Heart right ventricle (tissue), 16 donors: ENCODE measurements at regions of chr17 and their contacts with region 1.

Region 1: GRCh38 chr17:2029911-2030778 is at the start of gene DPH1:
- DNase-seq: peak; percentile 90
- ATAC-seq: peak; percentile 84 to 95 (median 89)
- H3K4me3 ChIP-seq: peak within 1 kb of the TSS; percentile 74 to 99 (median 95)
- H3K27ac ChIP-seq: peak within 1 kb of the TSS in 9 of 10 donors; percentile 23 to 84 (median 72)
- H3K4me1 ChIP-seq: peaks cover 10 to 43% (median 29%) of the 10 kb centered on the region in 9 donors
- H3K27me3 ChIP-seq: peaks cover 0 to 46% (median 19%) of the 10 kb centered on the region in 7 donors
- CTCF ChIP-seq: no peak
- total RNA-seq, gene DPH1: 22.8 to 40.0 (median 25.9) TPM

Region 2: DNA sequence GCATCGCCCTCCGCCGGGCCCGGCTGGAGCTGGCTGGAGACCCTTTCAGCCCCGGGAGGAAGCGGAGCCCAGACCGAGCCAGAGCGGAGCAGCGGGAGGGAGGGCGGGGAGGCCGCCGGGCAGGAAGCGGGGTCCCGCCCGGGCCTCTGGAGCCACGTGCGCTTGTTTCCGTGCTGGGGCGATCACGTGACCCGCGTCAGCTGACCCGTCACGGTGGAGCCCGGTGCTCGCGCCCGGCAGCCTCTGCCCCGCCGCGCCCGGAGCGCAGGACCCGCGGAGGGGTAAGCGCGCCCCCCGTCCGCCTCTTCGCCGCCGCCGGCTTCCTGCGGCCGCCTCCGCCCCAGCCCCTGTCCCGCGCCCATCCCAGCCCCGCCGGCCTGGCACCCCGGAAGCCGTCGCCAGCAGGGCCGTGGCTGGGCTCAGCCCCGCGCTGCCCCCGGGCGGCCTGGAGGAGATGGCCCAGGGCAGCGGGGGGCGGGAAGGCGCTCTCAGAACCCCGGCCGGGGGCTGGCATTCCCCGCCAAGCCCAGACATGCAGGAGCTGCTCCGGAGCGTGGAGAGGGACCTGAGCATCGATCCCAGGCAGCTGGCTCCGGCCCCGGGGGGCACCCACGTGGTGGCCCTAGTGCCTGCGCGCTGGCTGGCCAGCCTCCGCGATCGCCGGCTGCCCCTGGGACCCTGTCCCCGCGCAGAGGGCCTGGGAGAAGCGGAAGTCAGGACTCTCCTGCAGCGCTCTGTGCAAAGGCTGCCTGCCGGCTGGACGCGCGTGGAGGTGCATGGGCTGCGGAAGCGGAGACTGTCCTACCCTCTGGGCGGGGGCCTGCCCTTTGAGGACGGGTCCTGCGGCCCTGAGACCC is 305.4 kb before region 1 on chr17 and contains the start of gene WDR81:
- intact Hi-C with region 1: loop called in 2 of 10 experiments (anchors 10 kb)
- DNase-seq: peak; percentile 93
- ATAC-seq: peak; percentile 73 to 92 (median 89)
- H3K4me3 ChIP-seq: peak within 1 kb of the TSS; percentile 66 to 81 (median 72)
- H3K27ac ChIP-seq: peak within 1 kb of the TSS; percentile 76 to 97 (median 86)
- H3K4me1 ChIP-seq: peaks cover 11 to 78% (median 28%) of the 10 kb centered on the region in 9 donors
- H3K27me3 ChIP-seq: no peaks in the 10 kb centered on the region
- CTCF ChIP-seq: peak in 2 of 9 donors; percentile 2 to 26
- total RNA-seq, gene WDR81: 7.7 to 16.9 (median 9.2) TPM

Region 3: DNA sequence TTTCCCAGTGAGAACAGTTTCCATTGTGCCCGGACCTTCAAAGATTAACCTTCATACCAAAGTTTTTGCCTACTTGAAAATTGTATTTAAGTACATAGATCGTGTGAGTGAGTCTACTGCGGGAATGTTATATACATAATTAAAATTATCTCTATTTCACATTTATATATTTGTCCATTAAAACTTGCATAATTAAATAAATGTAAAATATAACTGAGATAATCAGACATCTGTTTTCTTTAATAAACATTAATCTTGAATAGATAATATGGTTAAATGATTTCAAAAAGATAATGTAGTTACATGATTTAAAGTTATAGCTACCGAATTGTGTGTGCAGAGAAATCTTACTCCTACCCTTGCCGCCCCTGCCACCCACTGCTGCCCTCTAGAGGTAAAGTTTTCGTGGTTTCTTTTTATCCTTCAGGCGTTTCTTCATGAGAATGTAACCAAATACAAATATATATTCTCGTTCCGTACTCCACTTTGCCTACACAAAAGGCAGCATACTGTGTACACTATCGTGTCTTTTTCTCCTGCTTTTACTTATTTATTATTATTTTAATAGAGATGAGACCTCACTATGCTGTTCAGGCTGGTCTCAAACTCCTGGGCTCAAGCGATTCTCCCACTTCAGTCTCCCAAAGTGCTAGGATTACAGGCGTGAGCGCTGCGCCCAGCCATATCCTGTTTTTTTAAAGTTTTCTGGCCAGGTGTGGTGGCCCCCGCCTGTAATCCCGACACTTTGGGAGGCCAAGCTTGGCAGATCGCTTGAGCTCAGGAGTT is 164.7 kb before region 1 on chr17:
- intact Hi-C with region 1: no loop called
- DNase-seq: peak in 1 of 2 donors; percentile 36
- ATAC-seq: peak in 1 of 8 donors; percentile 37
- H3K4me3 ChIP-seq: no peak overlapping the region
- H3K27ac ChIP-seq: no peak overlapping the region
- H3K4me1 ChIP-seq: no peaks in the 10 kb centered on the region
- H3K27me3 ChIP-seq: no peaks in the 10 kb centered on the region
- CTCF ChIP-seq: peak; percentile 48 to 75 (median 63)